ENCODE measurements at regions of chr2 and their contacts with region 1.

Region 1: GRCh38 chr2:207558106-207558505 is 28.3 kb downstream of the CREB1 start:
- DNase-seq: no peak
- H3K4me3 ChIP-seq: no peak overlapping the region
- H3K27ac ChIP-seq: no peak overlapping the region
- H3K4me1 ChIP-seq: peaks cover 20% of the 10 kb centered on the region
- H3K27me3 ChIP-seq: no peaks in the 10 kb centered on the region
- CTCF ChIP-seq: no peak

Region 2: DNA sequence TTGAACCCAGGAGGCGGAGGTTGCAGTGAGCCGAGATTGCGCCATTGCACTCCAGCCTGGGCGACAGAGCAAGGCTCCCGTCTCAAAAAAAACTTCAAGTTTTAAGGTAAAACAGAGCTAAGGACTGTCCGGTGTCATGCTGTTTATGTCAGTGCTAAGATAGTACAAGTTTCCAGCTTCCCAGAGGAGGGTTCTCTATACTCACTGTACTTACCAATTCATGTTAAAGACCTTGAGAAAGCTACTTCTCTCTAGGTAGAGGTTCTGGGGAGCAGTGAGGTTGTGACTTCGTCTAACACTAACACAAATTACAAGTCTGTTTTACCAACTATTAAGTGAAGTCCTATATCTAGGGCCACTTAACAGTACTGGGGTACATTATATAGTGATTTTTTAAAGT is 48.3 kb after region 1 on chr2:
- CTCF ChIA-PET with region 1: no interaction called
- POLR2A ChIA-PET with region 1: no interaction called
- intact Hi-C with region 1: loop called (anchors 5 kb)
- DNase-seq: no peak
- H3K4me3 ChIP-seq: no peak overlapping the region
- H3K27ac ChIP-seq: no peak overlapping the region
- H3K4me1 ChIP-seq: no peaks in the 10 kb centered on the region
- H3K27me3 ChIP-seq: no peaks in the 10 kb centered on the region
- CTCF ChIP-seq: no peak